ENCODE measurements at regions of chr14 and their contacts with region 1.

Region 1: DNA sequence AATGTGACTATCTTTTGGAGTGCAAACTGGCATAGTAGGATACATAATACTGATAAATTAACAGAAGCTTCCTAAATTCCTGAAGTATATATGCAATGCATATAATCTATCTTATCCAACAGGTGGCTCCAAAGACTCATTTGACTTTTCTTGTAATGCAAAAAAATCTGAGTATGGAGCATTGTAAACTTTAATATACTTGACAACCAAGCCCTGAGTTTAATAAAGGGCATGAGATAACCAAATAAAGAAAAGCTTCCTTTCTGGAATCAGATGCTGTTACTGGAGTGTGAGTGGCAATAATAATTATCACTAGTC is 1003.5 kb downstream of the FSCB start:
- DNase-seq: peak; percentile 14 to 49 (median 44)
- H3K4me3 ChIP-seq: no peak overlapping the region
- H3K27ac ChIP-seq: no peak overlapping the region
- H3K4me1 ChIP-seq: peaks cover 0 to 2% (median 0%) of the 10 kb centered on the region in 4 experiments
- H3K27me3 ChIP-seq: no peaks in the 10 kb centered on the region

Region 2: GRCh38 chr14:43795600-43796228 is 292.2 kb after region 1 on chr14:
- CTCF ChIA-PET with region 1: interaction called, 12 read pairs
- POLR2A ChIA-PET with region 1: no interaction called
- DNase-seq: peak; percentile 34 to 56 (median 47)
- H3K4me3 ChIP-seq: no peak overlapping the region
- H3K27ac ChIP-seq: no peak overlapping the region
- H3K4me1 ChIP-seq: no peaks in the 10 kb centered on the region
- H3K27me3 ChIP-seq: no peaks in the 10 kb centered on the region

Measured in common myeloid progenitor, CD34-positive (primary cell).